HCT116 (cell line): ENCODE measurements at regions of chr17 and their contacts with region 1.

Region 1: DNA sequence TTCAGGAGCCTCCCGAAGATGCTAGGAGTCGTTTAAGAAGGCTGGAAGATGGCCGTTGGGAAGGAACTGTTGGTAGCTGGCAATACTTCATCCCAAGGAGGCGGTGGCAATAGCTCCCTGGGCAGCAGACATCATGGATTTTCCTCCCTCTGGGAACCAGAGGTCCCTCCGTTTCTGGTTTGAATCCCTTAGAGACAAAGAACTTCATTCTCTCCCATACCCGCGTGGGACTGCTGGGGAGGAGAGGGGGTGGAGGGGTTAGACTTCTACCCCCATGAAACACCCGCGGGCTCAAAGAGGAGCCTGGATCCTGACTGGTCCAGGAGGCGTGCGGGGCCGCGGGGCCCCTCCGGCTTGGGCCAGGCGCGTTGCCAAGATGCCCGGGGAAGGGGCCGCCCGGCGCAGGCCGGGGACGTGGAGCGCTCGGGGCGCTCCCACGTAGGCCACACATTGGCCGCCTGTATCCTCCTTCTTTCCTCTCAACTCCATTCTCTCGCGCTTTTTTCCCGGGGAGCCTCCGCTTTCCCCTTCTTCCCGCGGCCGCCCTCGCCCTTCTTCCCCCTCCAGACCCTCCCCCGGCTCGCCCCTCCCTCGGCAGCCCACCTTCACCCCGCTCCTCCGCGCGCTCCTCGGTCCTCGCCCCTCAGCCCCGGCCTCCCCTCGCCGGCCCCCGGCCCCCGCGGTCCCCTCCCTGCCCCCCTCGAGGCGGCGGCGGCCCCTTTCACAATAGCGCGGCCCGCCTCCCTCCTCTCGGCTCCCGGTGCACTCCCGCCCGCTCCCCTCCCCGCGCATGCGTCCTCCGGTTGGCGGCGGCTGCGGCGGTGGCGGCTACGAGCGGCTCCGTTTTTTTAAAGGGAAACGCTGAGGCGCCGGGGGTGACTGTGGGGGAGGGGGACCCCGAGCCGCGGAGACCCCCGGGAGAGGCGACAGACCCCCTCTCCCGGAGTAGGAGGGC is at the start of gene MSL1:
- DNase-seq: no peak
- ATAC-seq: peak; percentile 73
- H3K4me3 ChIP-seq: peak within 1 kb of the TSS; percentile 70 to 86
- H3K27ac ChIP-seq: peak within 1 kb of the TSS; percentile 97
- H3K4me1 ChIP-seq: peaks cover 7 to 27% of the 10 kb centered on the region in 2 experiments; a peak in 3 of 4 replicates
- H3K27me3 ChIP-seq: no peaks in the 10 kb centered on the region
- CTCF ChIP-seq: no peak
- POLR2A ChIP-seq: no peak
- RAD21 ChIP-seq: no peak
- total RNA-seq, gene MSL1: 67.2 TPM

Region 2: GRCh38 chr17:40139566-40140058 is 18.2 kb after region 1 on chr17:
- CTCF ChIA-PET with region 1: no interaction called
- POLR2A ChIA-PET with region 1: interaction called, 16 read pairs
- RAD21 ChIA-PET with region 1: no interaction called
- intact Hi-C with region 1: no loop called
- DNase-seq: no peak
- ATAC-seq: 0 out of 2 replicates have a peak, but pooled peaks have one; percentile 0
- H3K4me3 ChIP-seq: peak overlapping the region; percentile 81 to 95
- H3K27ac ChIP-seq: peak overlapping the region; percentile 95
- H3K4me1 ChIP-seq: peaks cover 6 to 21% of the 10 kb centered on the region in 2 experiments
- H3K27me3 ChIP-seq: no peaks in the 10 kb centered on the region
- CTCF ChIP-seq: no peak
- POLR2A ChIP-seq: no peak
- RAD21 ChIP-seq: no peak